Naive thymus-derived CD4-positive, alpha-beta T cell (primary cell): ENCODE measurements at regions of chr15 and their contacts with region 1.

Region 1: GRCh38 chr15:72117486-72118399 is at the start of gene MYO9A:
- DNase-seq: peak; percentile 93 to 99 (median 98)
- ATAC-seq: peak; percentile 90
- H3K4me3 ChIP-seq: peak within 1 kb of the TSS; percentile 86
- H3K4me3 Mint-ChIP-seq: peak within 1 kb of the TSS; percentile 89 to 99 (median 97)
- H3K27ac ChIP-seq: peak within 1 kb of the TSS; percentile 94
- H3K27ac Mint-ChIP-seq: peak within 1 kb of the TSS; percentile 81 to 99 (median 99)
- H3K4me1 ChIP-seq: peaks cover 7 to 11% of the 10 kb centered on the region in 2 donors
- H3K4me1 Mint-ChIP-seq: peaks cover 23 to 55% (median 47%) of the 10 kb centered on the region in 7 donors
- H3K27me3 ChIP-seq: no peaks in the 10 kb centered on the region
- H3K27me3 Mint-ChIP-seq: peaks cover 0 to 23% (median 0%) of the 10 kb centered on the region in 5 donors
- total RNA-seq, gene MYO9A: 21.6 to 53.3 (median 29.7) TPM

Region 2: GRCh38 chr15:71679223-71680053 is 438.3 kb before region 1 on chr15:
- CTCF ChIA-PET with region 1: no interaction called
- POLR2A ChIA-PET with region 1: no interaction called
- intact Hi-C with region 1: no loop called
- DNase-seq: no peak
- ATAC-seq: no peak
- H3K4me3 ChIP-seq: no peak overlapping the region
- H3K4me3 Mint-ChIP-seq: no peak overlapping the region
- H3K27ac ChIP-seq: no peak overlapping the region
- H3K27ac Mint-ChIP-seq: no peak overlapping the region
- H3K4me1 ChIP-seq: no peaks in the 10 kb centered on the region
- H3K4me1 Mint-ChIP-seq: peaks cover 0 to 23% (median 0%) of the 10 kb centered on the region in 7 donors
- H3K27me3 ChIP-seq: no peaks in the 10 kb centered on the region
- H3K27me3 Mint-ChIP-seq: peaks cover 6 to 33% (median 24%) of the 10 kb centered on the region in 5 donors

Region 3: DNA sequence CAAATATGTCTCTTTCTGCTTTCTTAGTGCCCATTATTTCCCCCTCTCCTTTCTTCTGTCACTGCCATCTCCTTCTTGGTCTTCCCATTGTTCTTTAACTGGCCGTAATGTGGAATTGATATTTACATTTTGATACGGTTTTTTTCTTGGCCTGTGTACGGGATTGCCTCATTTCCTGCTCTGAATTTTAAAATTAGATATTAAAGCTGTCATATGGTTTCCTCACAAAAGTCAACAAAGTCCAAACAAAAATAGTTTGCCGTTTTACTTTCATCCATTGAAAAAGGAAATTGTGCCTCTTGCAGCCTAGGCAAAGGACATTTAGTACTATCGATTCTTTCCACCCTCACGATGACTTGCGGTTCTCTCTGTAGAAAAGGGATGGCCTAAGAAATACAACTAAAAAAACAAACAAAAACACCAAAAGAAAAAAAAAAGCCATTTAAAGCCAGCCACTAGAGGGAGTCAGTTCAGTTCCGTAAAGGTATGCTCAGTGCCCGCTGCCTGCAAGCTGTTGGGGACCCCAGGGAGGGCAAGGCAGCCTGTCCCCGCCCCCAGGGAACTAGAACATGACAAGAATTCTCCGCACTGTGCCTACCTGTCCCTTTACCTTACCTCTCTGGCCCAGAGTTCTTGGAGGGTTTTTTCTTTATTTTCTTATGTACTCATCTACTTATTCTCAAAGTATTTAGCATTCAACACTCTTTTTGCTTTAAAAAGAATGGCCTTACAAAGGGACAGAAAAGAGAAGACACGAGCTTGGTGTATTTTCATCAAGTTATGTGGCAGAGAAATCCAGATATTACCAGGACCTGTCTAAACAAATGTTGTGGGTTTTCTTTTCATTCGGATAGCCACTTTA is 337.4 kb before region 1 on chr15:
- CTCF ChIA-PET with region 1: no interaction called
- POLR2A ChIA-PET with region 1: no interaction called
- intact Hi-C with region 1: loop called in 1 of 2 experiments (anchors 1 kb)
- DNase-seq: peak in 6 of 9 donors; percentile 31 to 45 (median 34)
- ATAC-seq: peak; percentile 65
- H3K4me3 ChIP-seq: no peak overlapping the region
- H3K4me3 Mint-ChIP-seq: peak overlapping the region in 1 of 10 donors; percentile 6
- H3K27ac ChIP-seq: no peak overlapping the region
- H3K27ac Mint-ChIP-seq: peak overlapping the region in 1 of 9 donors; percentile 43
- H3K4me1 ChIP-seq: no peaks in the 10 kb centered on the region
- H3K4me1 Mint-ChIP-seq: peaks cover 0 to 17% (median 0%) of the 10 kb centered on the region in 7 donors
- H3K27me3 ChIP-seq: no peaks in the 10 kb centered on the region
- H3K27me3 Mint-ChIP-seq: peaks cover 4 to 22% (median 10%) of the 10 kb centered on the region in 5 donors

Region 4: DNA sequence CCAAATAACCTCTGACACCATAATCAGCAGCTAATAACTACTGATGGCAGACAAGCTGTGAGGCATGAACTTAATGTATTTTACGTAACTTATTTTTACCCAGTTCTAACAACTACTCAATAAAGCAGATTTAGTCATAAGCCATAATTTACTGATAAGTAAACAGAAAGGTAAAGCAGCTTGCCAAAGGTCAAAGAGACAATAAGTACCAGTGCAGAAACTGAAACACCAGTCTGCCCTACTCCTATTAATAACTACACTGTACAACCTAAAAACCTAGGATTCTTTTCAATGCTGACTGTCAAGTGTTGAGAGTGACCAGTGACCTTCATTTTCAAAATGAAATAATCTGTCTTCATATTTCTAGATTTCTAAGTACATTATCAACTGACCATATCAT is 155.2 kb before region 1 on chr15:
- CTCF ChIA-PET with region 1: no interaction called
- POLR2A ChIA-PET with region 1: no interaction called
- intact Hi-C with region 1: no loop called
- DNase-seq: no peak
- ATAC-seq: no peak
- H3K4me3 ChIP-seq: no peak overlapping the region
- H3K4me3 Mint-ChIP-seq: no peak overlapping the region
- H3K27ac ChIP-seq: no peak overlapping the region
- H3K27ac Mint-ChIP-seq: no peak overlapping the region
- H3K4me1 ChIP-seq: no peaks in the 10 kb centered on the region
- H3K4me1 Mint-ChIP-seq: peaks cover 0 to 7% (median 0%) of the 10 kb centered on the region in 7 donors
- H3K27me3 ChIP-seq: no peaks in the 10 kb centered on the region
- H3K27me3 Mint-ChIP-seq: no peaks in the 10 kb centered on the region

Region 5: GRCh38 chr15:72009222-72009621 is 108.5 kb before region 1 on chr15:
- CTCF ChIA-PET with region 1: no interaction called
- POLR2A ChIA-PET with region 1: no interaction called
- intact Hi-C with region 1: no loop called
- DNase-seq: no peak
- ATAC-seq: no peak
- H3K4me3 ChIP-seq: no peak overlapping the region
- H3K4me3 Mint-ChIP-seq: no peak overlapping the region
- H3K27ac ChIP-seq: no peak overlapping the region
- H3K27ac Mint-ChIP-seq: peak overlapping the region in 1 of 9 donors; percentile 14
- H3K4me1 ChIP-seq: no peaks in the 10 kb centered on the region
- H3K4me1 Mint-ChIP-seq: peaks cover 0 to 4% (median 0%) of the 10 kb centered on the region in 7 donors
- H3K27me3 ChIP-seq: no peaks in the 10 kb centered on the region
- H3K27me3 Mint-ChIP-seq: no peaks in the 10 kb centered on the region

Region 6: GRCh38 chr15:72231066-72231846 is 113.5 kb after region 1 on chr15 and contains the start of gene PKM:
- CTCF ChIA-PET with region 1: no interaction called
- POLR2A ChIA-PET with region 1: interaction called, 3 read pairs
- intact Hi-C with region 1: loop called (anchors 1 kb)
- DNase-seq: peak; percentile 82 to 99 (median 88)
- ATAC-seq: peak; percentile 65
- H3K4me3 ChIP-seq: peak within 1 kb of the TSS; percentile 73
- H3K4me3 Mint-ChIP-seq: peak within 1 kb of the TSS; percentile 95 to 100 (median 99)
- H3K27ac ChIP-seq: peak within 1 kb of the TSS; percentile 73
- H3K27ac Mint-ChIP-seq: peak within 1 kb of the TSS; percentile 89 to 99 (median 95)
- H3K4me1 ChIP-seq: peaks cover 34 to 39% of the 10 kb centered on the region in 2 donors
- H3K4me1 Mint-ChIP-seq: peaks cover 40 to 55% (median 50%) of the 10 kb centered on the region in 7 donors
- H3K27me3 ChIP-seq: no peaks in the 10 kb centered on the region
- H3K27me3 Mint-ChIP-seq: peaks cover 0 to 3% (median 0%) of the 10 kb centered on the region in 5 donors
- total RNA-seq, gene PKM: 237 to 1,627 (median 329) TPM

Region 7: DNA sequence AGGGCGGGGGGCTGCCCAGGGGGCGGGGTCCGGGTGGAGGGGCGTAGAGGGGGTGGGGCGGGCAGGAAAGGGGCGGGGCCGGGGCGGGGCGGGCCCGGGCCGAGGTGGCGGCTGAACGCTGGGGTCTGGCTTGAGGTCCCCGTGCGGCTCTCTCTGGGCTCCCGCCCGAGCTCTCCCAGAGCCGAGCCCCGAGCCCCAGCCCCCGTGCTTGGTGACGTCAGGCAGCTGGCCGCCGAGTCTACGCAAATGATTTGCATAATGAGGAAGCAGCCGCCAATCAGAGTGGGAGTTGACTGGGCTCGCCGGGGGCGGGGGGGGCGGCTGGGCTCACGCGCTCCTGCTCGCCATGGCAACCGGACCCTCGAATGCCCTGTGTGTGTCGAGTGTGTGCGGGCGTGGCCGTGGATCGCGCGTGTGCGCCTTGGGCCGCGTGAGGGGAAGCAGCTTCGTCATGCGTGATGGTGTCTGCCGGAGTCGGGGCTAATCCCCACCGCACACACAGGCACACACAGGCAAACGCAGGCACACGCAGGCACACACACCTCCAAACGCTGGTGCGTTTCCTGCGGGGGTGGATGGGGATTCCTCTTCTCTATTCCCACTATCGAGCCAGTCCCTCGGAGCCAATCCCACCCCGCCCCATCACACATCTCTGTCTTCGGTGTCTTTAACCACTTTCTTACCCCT is 202.4 kb after region 1 on chr15 and contains the start of gene CELF6:
- CTCF ChIA-PET with region 1: no interaction called
- POLR2A ChIA-PET with region 1: no interaction called
- intact Hi-C with region 1: loop called in 1 of 2 experiments (anchors 1 kb)
- DNase-seq: peak; percentile 56 to 88 (median 65)
- ATAC-seq: peak; percentile 92
- H3K4me3 ChIP-seq: peak within 1 kb of the TSS; percentile 57
- H3K4me3 Mint-ChIP-seq: peak within 1 kb of the TSS; percentile 78 to 90 (median 86)
- H3K27ac ChIP-seq: no peak within 1 kb of the TSS
- H3K27ac Mint-ChIP-seq: peak within 1 kb of the TSS; percentile 9 to 91 (median 76)
- H3K4me1 ChIP-seq: peaks cover 7 to 10% of the 10 kb centered on the region in 2 donors
- H3K4me1 Mint-ChIP-seq: peaks cover 20 to 25% (median 21%) of the 10 kb centered on the region in 7 donors
- H3K27me3 ChIP-seq: no peaks in the 10 kb centered on the region
- H3K27me3 Mint-ChIP-seq: peaks cover 0 to 34% (median 0%) of the 10 kb centered on the region in 5 donors
- total RNA-seq, gene CELF6: 1.2 to 5.7 (median 3.8) TPM

Region 8: DNA sequence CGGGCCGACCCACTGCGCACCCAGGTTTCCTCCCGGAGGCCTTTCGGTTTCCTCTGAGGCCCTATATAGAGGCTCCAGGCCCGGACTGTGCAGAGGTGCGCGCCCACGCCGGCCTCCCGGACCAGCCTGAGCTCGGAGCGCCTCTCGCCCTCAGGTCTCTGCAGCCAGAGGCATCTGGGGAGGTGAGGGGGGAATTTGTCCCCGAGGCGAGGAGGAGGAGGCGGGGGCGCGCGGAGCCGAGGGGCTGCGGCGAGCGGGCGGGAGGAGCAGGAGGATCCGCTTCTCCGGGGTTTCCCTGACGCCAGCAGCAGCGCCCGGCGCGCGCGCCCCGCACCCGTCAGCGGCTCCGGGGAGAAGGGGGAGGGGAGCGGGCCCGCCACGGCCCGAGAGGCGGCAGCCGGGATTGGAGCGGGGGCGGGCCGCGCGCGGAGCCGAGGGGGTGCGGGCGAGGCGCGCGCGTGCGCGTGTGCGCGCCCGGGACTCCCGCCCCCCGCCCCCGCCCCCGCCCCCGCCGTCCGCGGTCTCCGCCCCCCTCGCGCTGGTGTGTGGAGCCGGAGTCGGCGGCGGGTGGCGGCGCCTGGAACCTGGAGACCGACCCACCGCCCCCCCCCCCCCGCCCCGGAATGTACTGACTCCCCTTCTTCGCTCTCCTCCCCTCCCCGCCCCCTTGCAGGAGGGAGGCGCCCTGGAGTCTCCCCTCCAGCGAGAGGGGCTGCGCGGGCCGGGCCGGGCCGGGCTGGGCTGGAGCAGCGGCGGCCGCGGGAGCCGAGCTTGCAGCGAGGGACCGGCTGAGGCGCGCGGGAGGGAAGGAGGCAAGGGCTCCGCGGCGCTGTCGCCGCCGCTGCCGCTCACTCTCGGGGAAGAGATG is 934.3 kb after region 1 on chr15 and contains the start of gene NEO1:
- CTCF ChIA-PET with region 1: no interaction called
- POLR2A ChIA-PET with region 1: no interaction called
- intact Hi-C with region 1: loop called in 1 of 2 experiments (anchors 2 kb)
- DNase-seq: peak; percentile 71 to 86 (median 84)
- ATAC-seq: peak; percentile 90
- H3K4me3 ChIP-seq: peak within 1 kb of the TSS; percentile 74
- H3K4me3 Mint-ChIP-seq: peak within 1 kb of the TSS; percentile 81 to 95 (median 88)
- H3K27ac ChIP-seq: peak within 1 kb of the TSS; percentile 74
- H3K27ac Mint-ChIP-seq: peak within 1 kb of the TSS; percentile 36 to 88 (median 62)
- H3K4me1 ChIP-seq: peaks cover 8 to 11% of the 10 kb centered on the region in 2 donors
- H3K4me1 Mint-ChIP-seq: peaks cover 4 to 14% (median 11%) of the 10 kb centered on the region in 7 donors
- H3K27me3 ChIP-seq: no peaks in the 10 kb centered on the region
- H3K27me3 Mint-ChIP-seq: peaks cover 0 to 37% (median 0%) of the 10 kb centered on the region in 5 donors
- total RNA-seq, gene NEO1: 4.4 to 9.5 (median 6.9) TPM